ENCODE measurements at regions of chr4 and their contacts with region 1.

Region 1: DNA sequence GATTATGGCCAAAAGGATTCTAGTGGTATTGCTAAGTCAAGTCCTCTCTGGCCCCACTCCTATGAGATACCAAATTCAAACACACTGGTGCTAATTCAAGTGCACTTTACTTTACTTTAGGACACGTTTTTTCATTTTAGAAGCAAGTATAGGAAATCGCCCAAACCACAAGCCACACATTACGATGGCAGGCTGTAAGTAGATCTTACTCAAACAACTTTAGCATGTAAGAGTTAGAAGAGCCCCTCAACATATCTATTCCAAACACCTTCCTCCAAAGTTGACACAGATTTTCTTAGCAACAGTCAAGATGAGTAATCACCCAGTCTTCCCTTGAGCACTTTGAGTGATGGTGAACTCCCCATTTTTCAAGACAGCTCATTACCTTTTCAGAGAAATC is 43.6 kb downstream of the DRD5 start:
- DNase-seq: peak; percentile 21
- H3K4me3 Mint-ChIP-seq: no peak overlapping the region
- H3K27ac Mint-ChIP-seq: no peak overlapping the region
- H3K4me1 Mint-ChIP-seq: peaks cover 14% of the 10 kb centered on the region
- H3K27me3 Mint-ChIP-seq: peaks cover 19% of the 10 kb centered on the region

Region 2: GRCh38 chr4:9845791-9846493 is 20.9 kb after region 1 on chr4:
- intact Hi-C with region 1: no loop called
- DNase-seq: no peak
- H3K4me3 Mint-ChIP-seq: no peak overlapping the region
- H3K27ac Mint-ChIP-seq: no peak overlapping the region
- H3K4me1 Mint-ChIP-seq: no peaks in the 10 kb centered on the region
- H3K27me3 Mint-ChIP-seq: peaks cover 3% of the 10 kb centered on the region

Region 3: GRCh38 chr4:9970392-9971013 is 145.5 kb after region 1 on chr4:
- intact Hi-C with region 1: loop called (anchors 1 kb)
- DNase-seq: no peak
- H3K4me3 Mint-ChIP-seq: peak overlapping the region; percentile 37
- H3K27ac Mint-ChIP-seq: peak overlapping the region; percentile 83
- H3K4me1 Mint-ChIP-seq: peaks cover 23% of the 10 kb centered on the region
- H3K27me3 Mint-ChIP-seq: peaks cover 5% of the 10 kb centered on the region

Measured in activated T-helper 1 cell treated with anti-CD3 and anti-CD28 coated beads, Interleukin-12 subunit alpha, Interleukin-12 subunit beta, Interleukin-2, Interleukin-4 antibody, amounts not matched to agents 30 ng/mL and 10 ng/mL and 1 ng/mL, durations not matched to agents 14 hours and 24 hours and 36 hours (primary cell).